A673 (cell line): ENCODE measurements at regions of chr9 and their contacts with region 1.

Region 1: GRCh38 chr9:100579665-100580064 is 1.8 kb downstream of the CAVIN4 start:
- DNase-seq: no peak
- H3K4me3 ChIP-seq: no peak overlapping the region
- H3K27ac ChIP-seq: no peak overlapping the region
- H3K4me1 ChIP-seq: peaks cover 9% of the 10 kb centered on the region
- H3K27me3 ChIP-seq: no peaks in the 10 kb centered on the region
- CTCF ChIP-seq: no peak

Region 2: GRCh38 chr9:100505564-100506159 is 74.0 kb before region 1 on chr9:
- CTCF ChIA-PET with region 1: no interaction called
- POLR2A ChIA-PET with region 1: no interaction called
- intact Hi-C with region 1: loop called (anchors 5 kb)
- DNase-seq: peak; percentile 86
- H3K4me3 ChIP-seq: no peak overlapping the region
- H3K27ac ChIP-seq: no peak overlapping the region
- H3K4me1 ChIP-seq: no peaks in the 10 kb centered on the region
- H3K27me3 ChIP-seq: no peaks in the 10 kb centered on the region
- CTCF ChIP-seq: peak; percentile 95

Region 3: GRCh38 chr9:100670719-100671118 is 91.1 kb after region 1 on chr9:
- CTCF ChIA-PET with region 1: no interaction called
- POLR2A ChIA-PET with region 1: no interaction called
- intact Hi-C with region 1: no loop called
- DNase-seq: peak; percentile 54
- H3K4me3 ChIP-seq: no peak overlapping the region
- H3K27ac ChIP-seq: no peak overlapping the region
- H3K4me1 ChIP-seq: peaks cover 8% of the 10 kb centered on the region
- H3K27me3 ChIP-seq: peaks cover 7% of the 10 kb centered on the region
- CTCF ChIP-seq: no peak